Activated T-helper 1 cell treated with anti-CD3 and anti-CD28 coated beads, Interleukin-12 subunit alpha, Interleukin-12 subunit beta, Interleukin-2, Interleukin-4 antibody, amounts not matched to agents 30 ng/mL and 10 ng/mL and 1 ng/mL, durations not matched to agents 14 hours and 24 hours and 36 hours (primary cell): ENCODE measurements at regions of chr20 and their contacts with region 1.

Region 1: DNA sequence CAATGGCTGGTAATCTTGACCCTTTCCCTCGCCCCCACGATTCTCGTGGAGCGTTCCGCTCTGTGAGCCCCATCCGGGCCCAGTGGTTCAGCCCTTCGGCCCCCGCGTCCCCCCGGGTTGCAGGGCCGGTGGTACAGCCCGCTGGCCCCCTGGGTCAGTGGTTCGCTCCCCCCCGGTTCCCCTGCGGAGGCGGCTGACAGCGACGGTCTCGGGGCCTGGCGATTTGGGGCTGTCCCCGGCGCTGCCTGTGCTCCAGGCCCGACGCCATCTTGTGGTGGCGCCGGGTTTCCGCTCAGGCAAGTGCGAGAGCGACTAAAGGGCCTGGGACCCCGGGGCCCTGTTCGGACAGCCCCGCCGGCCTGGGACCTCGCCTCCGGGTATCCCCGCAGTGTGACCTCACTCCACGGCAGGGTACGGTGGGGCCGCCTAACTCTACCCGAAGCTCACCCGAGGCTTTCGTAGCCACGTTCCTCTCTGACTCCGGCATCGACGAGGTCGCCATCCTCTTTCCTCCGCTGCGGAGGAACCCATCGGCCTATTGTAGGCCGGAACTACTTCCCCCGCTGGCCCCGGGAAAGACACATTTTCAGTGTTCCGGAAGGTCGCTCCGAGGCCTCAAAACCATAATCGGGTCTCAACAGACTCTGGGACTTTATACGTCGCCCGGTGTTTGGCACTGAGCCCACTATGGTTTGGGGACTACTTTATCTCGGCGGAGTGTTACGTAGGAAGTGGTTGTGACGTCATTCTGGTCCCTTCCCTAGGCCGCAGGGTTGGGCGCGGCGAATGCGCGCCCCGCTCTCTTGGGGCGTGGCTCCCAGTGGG is at the start of gene ZNF335:
- DNase-seq: peak; percentile 94
- H3K4me3 Mint-ChIP-seq: peak within 1 kb of the TSS; percentile 89
- H3K27ac Mint-ChIP-seq: peak within 1 kb of the TSS; percentile 100
- H3K4me1 Mint-ChIP-seq: peaks cover 23% of the 10 kb centered on the region
- H3K27me3 Mint-ChIP-seq: no peaks in the 10 kb centered on the region
- total RNA-seq, gene ZNF335: 38.3 and 40.9 TPM in 2 replicates

Region 2: DNA sequence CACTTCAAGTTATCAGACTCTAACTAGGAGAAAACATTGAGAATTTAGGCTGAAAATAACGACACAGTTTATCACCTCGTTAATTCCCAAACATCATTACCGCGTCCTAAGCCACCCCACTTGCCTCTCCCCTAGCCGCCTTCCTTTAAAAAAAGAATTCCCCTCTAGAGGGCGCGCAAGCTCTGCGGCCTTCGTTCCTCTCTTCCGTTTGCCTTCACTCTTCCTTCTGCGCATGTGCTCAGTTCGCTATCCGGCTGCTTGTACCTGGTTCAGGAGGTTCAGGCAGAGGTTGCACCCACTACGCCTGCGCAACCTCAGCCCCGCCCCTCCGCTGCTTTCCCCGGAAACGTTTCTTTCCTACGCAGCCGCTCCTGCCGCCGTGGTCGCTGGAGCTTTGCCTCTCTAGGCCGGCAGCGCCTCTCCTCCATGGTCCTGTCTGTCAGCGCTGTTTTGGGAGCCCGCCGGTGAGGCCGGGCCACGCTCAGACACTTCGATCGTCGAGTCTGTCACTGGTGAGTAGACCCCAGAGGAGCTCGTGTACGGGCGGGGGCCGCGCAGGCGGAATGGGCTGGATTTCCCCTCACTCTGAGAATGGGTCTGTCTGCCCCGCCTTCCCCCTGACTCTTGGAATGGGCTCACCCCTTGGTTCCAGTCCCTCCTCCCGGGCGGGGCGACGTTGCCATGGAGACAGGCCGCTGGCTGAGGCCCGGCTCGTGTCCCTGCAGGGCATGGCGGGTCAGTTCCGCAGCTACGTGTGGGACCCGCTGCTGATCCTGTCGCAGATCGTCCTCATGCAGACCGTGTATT is 608.9 kb before region 1 on chr20 and contains the start of gene SYS1:
- intact Hi-C with region 1: loop called (anchors 2 kb)
- DNase-seq: peak; percentile 97
- H3K4me3 Mint-ChIP-seq: peak within 1 kb of the TSS; percentile 95
- H3K27ac Mint-ChIP-seq: peak within 1 kb of the TSS; percentile 97
- H3K4me1 Mint-ChIP-seq: peaks cover 69% of the 10 kb centered on the region
- H3K27me3 Mint-ChIP-seq: no peaks in the 10 kb centered on the region
- total RNA-seq, gene SYS1: 25.6 and 26.4 TPM in 2 replicates

Region 3: GRCh38 chr20:45812157-45813020 is 159.5 kb before region 1 on chr20 and contains the start of gene UBE2C:
- intact Hi-C with region 1: loop called (anchors 2 kb)
- DNase-seq: peak; percentile 95
- H3K4me3 Mint-ChIP-seq: peak within 1 kb of the TSS; percentile 89
- H3K27ac Mint-ChIP-seq: peak within 1 kb of the TSS; percentile 82
- H3K4me1 Mint-ChIP-seq: peaks cover 35% of the 10 kb centered on the region
- H3K27me3 Mint-ChIP-seq: no peaks in the 10 kb centered on the region
- total RNA-seq, gene UBE2C: 114 and 118 TPM in 2 replicates

Region 4: GRCh38 chr20:45910670-45911485 is 61.0 kb before region 1 on chr20:
- intact Hi-C with region 1: loop called (anchors 1 kb)
- DNase-seq: peak; percentile 81
- H3K4me3 Mint-ChIP-seq: peak overlapping the region; percentile 45
- H3K27ac Mint-ChIP-seq: peak overlapping the region; percentile 33
- H3K4me1 Mint-ChIP-seq: peaks cover 14% of the 10 kb centered on the region
- H3K27me3 Mint-ChIP-seq: peaks cover 14% of the 10 kb centered on the region

Region 5: DNA sequence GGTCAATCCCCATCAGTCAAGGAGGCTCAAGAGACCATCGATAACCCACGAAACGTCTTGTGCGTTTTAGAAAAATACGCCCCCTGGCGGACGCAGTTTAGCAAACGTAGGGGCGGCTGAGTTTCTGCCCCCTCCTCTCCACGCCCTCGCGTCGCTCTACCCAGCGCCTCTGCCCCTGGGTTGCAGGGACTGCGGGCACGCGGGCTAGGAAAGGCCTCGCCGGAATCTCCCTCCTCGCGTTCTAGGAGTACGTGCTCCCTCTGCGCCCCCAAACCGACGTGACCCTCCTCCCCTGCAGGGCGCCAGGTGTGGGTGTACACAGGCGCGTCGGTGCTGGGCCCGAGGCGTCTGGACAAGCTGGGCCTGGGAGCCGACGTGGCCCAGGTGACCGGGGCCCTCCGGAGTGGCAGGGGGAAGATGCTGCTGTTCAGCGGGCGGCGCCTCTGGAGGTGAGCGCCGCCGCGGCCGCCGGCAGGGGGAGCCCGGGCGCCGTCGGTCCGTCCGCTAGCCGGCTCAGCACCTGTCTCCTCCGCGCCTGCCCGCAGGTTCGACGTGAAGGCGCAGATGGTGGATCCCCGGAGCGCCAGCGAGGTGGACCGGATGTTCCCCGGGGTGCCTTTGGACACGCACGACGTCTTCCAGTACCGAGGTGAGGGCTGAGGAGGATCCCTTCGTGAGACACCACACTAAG is 42.1 kb after region 1 on chr20:
- intact Hi-C with region 1: loop called (anchors 5 kb)
- DNase-seq: peak; percentile 58
- H3K4me3 Mint-ChIP-seq: peak overlapping the region; percentile 38
- H3K27ac Mint-ChIP-seq: no peak overlapping the region
- H3K4me1 Mint-ChIP-seq: peaks cover 52% of the 10 kb centered on the region
- H3K27me3 Mint-ChIP-seq: peaks cover 59% of the 10 kb centered on the region

Region 6: GRCh38 chr20:46406199-46406985 is 434.5 kb after region 1 on chr20 and contains the start of gene ELMO2:
- intact Hi-C with region 1: loop called (anchors 1 kb)
- DNase-seq: peak; percentile 94
- H3K4me3 Mint-ChIP-seq: peak within 1 kb of the TSS; percentile 94
- H3K27ac Mint-ChIP-seq: peak within 1 kb of the TSS; percentile 96
- H3K4me1 Mint-ChIP-seq: peaks cover 68% of the 10 kb centered on the region
- H3K27me3 Mint-ChIP-seq: no peaks in the 10 kb centered on the region
- total RNA-seq, gene ELMO2: 79.7 and 91.1 TPM in 2 replicates